ENCODE measurements at regions of chr5 and their contacts with region 1.

Region 1: GRCh38 chr5:145981589-145982491 is 45.5 kb downstream of the SH3RF2 start:
- DNase-seq: peak; percentile 68
- H3K4me3 Mint-ChIP-seq: peak overlapping the region; percentile 9
- H3K27ac Mint-ChIP-seq: peak overlapping the region; percentile 50
- H3K4me1 Mint-ChIP-seq: peaks cover 73% of the 10 kb centered on the region
- H3K27me3 Mint-ChIP-seq: no peaks in the 10 kb centered on the region
- CTCF ChIP-seq: no peak

Region 2: DNA sequence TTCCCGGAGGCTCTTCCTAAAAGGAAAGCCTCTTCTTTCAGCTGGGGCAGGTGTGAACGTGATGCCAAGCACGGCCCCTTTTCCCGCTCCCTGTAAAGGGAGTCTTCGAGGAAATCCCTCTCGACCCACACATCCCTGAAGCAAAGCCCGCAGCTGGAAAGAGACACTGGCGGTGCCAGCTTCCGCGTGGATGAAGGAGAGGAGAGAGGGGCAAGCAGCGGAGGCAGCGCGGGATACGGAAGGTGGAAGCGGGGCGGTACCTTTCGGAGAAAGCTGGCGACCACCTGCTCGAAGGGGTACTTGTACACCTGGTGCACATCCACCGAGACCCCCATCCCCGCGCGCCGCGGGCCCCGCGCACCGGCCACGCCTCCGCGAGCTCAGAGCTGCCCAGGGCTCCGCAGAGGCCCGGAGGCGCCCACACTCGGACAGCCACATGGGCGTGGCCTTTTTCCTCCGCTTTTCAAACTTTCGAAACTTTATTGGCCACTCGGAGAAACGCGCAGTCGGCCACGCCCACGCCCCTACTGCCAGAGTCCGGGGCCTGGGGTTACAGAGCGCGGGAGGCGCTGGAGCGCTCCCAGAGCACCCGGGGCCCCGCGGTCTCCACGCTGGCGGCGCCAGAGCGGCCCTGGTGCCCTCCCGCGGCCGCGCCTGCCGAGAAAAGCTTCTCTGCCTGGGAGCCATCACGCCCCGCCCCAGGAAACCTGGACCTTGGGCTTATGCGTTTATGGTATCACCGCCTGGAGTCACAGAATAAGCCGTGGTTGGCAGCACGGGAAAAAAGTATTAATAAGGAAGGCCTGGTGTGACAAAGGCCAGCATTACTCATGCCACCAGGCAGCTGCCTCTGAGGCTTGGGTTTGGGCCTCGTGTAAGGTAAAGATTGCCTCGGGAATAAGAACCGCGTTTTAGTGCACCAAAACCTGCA is 146.7 kb before region 1 on chr5 and contains the start of gene PRELID2:
- CTCF ChIA-PET with region 1: interaction called, 4 read pairs
- intact Hi-C with region 1: loop called (anchors 2 kb)
- DNase-seq: peak; percentile 96
- H3K4me3 Mint-ChIP-seq: peak within 1 kb of the TSS; percentile 76
- H3K27ac Mint-ChIP-seq: peak within 1 kb of the TSS; percentile 40
- H3K4me1 Mint-ChIP-seq: peaks cover 73% of the 10 kb centered on the region
- H3K27me3 Mint-ChIP-seq: no peaks in the 10 kb centered on the region
- CTCF ChIP-seq: no peak
- total RNA-seq, gene PRELID2: 33.2 and 33.4 TPM in 2 replicates

Region 3: GRCh38 chr5:145908205-145908945 is 73.5 kb before region 1 on chr5:
- CTCF ChIA-PET with region 1: interaction called, 5 read pairs
- intact Hi-C with region 1: loop called (anchors 2 kb)
- DNase-seq: peak; percentile 24
- H3K4me3 Mint-ChIP-seq: no peak overlapping the region
- H3K27ac Mint-ChIP-seq: no peak overlapping the region
- H3K4me1 Mint-ChIP-seq: peaks cover 7% of the 10 kb centered on the region
- H3K27me3 Mint-ChIP-seq: no peaks in the 10 kb centered on the region
- CTCF ChIP-seq: no peak

Region 4: DNA sequence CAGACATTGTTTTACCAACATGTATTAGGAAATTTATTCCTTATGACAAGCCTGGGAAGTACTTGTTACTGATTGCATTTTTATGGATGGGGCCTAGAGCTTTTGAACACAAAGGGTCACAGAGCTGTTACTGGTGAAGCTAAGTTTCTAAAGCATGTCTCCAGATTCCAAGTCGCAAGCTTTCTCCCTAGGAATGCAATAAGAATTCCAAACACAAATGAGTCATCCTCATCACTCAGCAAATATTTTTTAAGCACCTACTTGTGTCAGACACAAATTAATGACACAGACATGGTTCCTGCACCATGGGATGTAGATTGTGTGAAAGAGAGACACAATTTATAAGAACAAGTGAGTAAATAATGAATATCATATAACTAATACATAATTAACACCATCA is 56.5 kb before region 1 on chr5:
- CTCF ChIA-PET with region 1: no interaction called
- intact Hi-C with region 1: no loop called
- DNase-seq: no peak
- H3K4me3 Mint-ChIP-seq: no peak overlapping the region
- H3K27ac Mint-ChIP-seq: no peak overlapping the region
- H3K4me1 Mint-ChIP-seq: no peaks in the 10 kb centered on the region
- H3K27me3 Mint-ChIP-seq: no peaks in the 10 kb centered on the region
- CTCF ChIP-seq: no peak

Region 5: DNA sequence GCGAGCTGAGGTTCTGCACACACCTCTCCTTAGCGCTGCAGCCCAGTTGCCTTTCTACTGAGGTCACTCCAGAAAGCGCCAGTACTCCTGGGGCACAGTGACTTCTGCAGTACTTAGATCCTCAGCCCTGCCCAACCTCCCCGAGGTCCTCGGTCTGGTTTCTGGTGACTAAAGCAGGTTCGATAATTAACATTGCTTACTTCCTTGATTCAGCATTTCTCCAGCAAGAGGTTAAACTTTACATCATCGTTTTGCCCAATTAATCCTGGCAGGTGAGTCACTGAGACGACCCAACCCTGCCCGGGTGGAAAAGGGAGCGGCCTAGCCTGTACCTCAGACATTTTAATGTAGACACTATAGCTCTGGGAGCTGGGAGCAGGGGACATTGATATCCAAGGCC is 45.9 kb after region 1 on chr5:
- CTCF ChIA-PET with region 1: interaction called, 5 read pairs
- intact Hi-C with region 1: loop called (anchors 2 kb)
- DNase-seq: peak; percentile 88
- H3K4me3 Mint-ChIP-seq: peak overlapping the region; percentile 39
- H3K27ac Mint-ChIP-seq: peak overlapping the region; percentile 91
- H3K4me1 Mint-ChIP-seq: peaks cover 56% of the 10 kb centered on the region
- H3K27me3 Mint-ChIP-seq: no peaks in the 10 kb centered on the region
- CTCF ChIP-seq: no peak

Measured in Calu3 (cell line).